Sigmoid colon (tissue), 7 donors: ENCODE measurements at regions of chr7 and their contacts with region 1.

Region 1: GRCh38 chr7:120987683-120988590 is 574 bp upstream of the CPED1 start:
- DNase-seq: peak; percentile 96
- H3K4me3 ChIP-seq: peak overlapping the region; percentile 45 to 62 (median 54)
- H3K27ac ChIP-seq: peak overlapping the region; percentile 86 to 95 (median 88)
- H3K4me1 ChIP-seq: peaks cover 0 to 20% (median 6%) of the 10 kb centered on the region in 4 donors
- H3K27me3 ChIP-seq: no peaks in the 10 kb centered on the region
- CTCF ChIP-seq: peak; percentile 78 to 92 (median 89)
- EP300 ChIP-seq: no peak
- POLR2A ChIP-seq: no peak

Region 2: GRCh38 chr7:120785095-120785494 is 202.8 kb before region 1 on chr7:
- intact Hi-C with region 1: no loop called
- DNase-seq: no peak
- H3K4me3 ChIP-seq: no peak overlapping the region
- H3K27ac ChIP-seq: no peak overlapping the region
- H3K4me1 ChIP-seq: no peaks in the 10 kb centered on the region
- H3K27me3 ChIP-seq: no peaks in the 10 kb centered on the region
- CTCF ChIP-seq: no peak
- EP300 ChIP-seq: no peak
- POLR2A ChIP-seq: no peak

Region 3: DNA sequence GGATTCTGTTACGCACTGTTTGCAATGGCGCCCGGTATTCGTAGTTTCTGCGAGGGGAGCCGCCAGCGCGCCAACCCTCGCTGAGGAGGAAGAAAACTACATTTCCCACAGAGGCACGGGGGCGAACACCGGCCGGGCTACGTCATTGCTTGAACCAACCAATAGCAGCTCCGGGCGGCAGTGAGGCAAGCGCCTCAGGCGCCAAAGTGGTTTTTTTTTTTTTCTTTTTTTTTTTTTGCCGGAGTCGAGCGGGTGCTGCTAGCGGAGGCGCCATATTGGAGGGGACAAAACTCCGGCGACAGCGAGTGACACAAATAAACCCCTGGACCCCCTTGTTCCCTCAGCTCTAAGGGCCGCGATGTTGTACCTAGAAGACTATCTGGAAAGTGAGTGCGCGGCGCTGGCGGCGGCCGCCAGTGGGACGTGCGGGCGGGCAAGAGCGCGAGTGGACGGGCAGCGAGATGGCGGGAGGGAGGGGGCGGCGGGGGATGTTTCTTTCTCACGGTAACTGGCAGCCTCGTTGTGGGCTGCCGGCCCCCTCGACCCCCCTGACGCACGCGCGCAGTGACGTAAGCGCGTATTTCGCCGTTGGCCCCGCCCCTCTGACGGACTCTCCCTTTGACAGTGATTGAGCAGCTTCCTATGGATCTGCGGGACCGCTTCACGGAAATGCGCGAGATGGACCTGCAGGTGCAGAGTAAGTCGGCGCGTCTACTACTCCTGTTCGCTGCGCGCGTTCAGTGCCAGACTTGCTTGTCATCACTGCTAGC is 37.2 kb before region 1 on chr7 and contains the start of gene ING3:
- intact Hi-C with region 1: loop called (anchors 2 kb)
- DNase-seq: peak; percentile 99
- H3K4me3 ChIP-seq: peak within 1 kb of the TSS; percentile 64 to 73 (median 68)
- H3K27ac ChIP-seq: peak within 1 kb of the TSS; percentile 94 to 96 (median 96)
- H3K4me1 ChIP-seq: peaks cover 0 to 34% (median 10%) of the 10 kb centered on the region in 4 donors
- H3K27me3 ChIP-seq: no peaks in the 10 kb centered on the region
- CTCF ChIP-seq: no peak
- EP300 ChIP-seq: peak in 1 of 4 donors; percentile 56
- POLR2A ChIP-seq: no peak
- total RNA-seq, gene ING3: 16.6 to 33.1 (median 25.4) TPM

Region 4: GRCh38 chr7:121081327-121081936 is 93.5 kb after region 1 on chr7:
- intact Hi-C with region 1: loop called (anchors 1 kb)
- DNase-seq: no peak
- H3K4me3 ChIP-seq: no peak overlapping the region
- H3K27ac ChIP-seq: peak overlapping the region in 3 of 4 donors; percentile 10 to 79 (median 78)
- H3K4me1 ChIP-seq: peaks cover 0 to 48% (median 39%) of the 10 kb centered on the region in 4 donors
- H3K27me3 ChIP-seq: no peaks in the 10 kb centered on the region
- CTCF ChIP-seq: peak; percentile 64 to 77 (median 75)
- EP300 ChIP-seq: no peak
- POLR2A ChIP-seq: no peak

Region 5: GRCh38 chr7:121107923-121108498 is 120.1 kb after region 1 on chr7:
- intact Hi-C with region 1: loop called (anchors 2 kb)
- DNase-seq: no peak
- H3K4me3 ChIP-seq: no peak overlapping the region
- H3K27ac ChIP-seq: no peak overlapping the region
- H3K4me1 ChIP-seq: peaks cover 0 to 9% (median 0%) of the 10 kb centered on the region in 4 donors
- H3K27me3 ChIP-seq: no peaks in the 10 kb centered on the region
- CTCF ChIP-seq: peak; percentile 63 to 81 (median 70)
- EP300 ChIP-seq: no peak
- POLR2A ChIP-seq: no peak

Region 6: DNA sequence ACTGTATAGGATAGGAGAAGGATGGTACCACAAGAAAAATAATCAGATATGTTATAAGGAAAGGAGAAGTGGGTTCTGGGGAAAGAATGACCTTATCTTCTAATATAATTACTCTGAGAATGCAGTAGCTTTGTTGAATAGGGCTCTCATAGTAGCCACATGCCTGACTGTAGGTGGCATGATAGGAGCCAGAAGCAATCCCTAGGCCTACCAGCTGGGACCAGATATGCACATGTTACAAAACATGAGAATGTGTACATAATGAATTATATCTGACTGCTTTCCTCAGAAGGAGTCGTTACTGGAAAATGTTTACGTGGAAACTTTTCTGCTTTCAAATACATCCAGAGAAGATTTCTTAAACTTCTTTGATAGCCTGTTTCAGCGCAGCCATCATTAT is 461.4 kb after region 1 on chr7:
- intact Hi-C with region 1: no loop called
- DNase-seq: no peak
- H3K4me3 ChIP-seq: no peak overlapping the region
- H3K27ac ChIP-seq: no peak overlapping the region
- H3K4me1 ChIP-seq: no peaks in the 10 kb centered on the region
- H3K27me3 ChIP-seq: no peaks in the 10 kb centered on the region
- CTCF ChIP-seq: no peak
- EP300 ChIP-seq: no peak
- POLR2A ChIP-seq: no peak